ENCODE measurements at regions of chr7 and their contacts with region 1.

Region 1: GRCh38 chr7:149714050-149714909 is 59.1 kb downstream of the ZNF467 start:
- DNase-seq: peak; percentile 68 to 86
- H3K4me3 ChIP-seq: peak overlapping the region; percentile 76
- H3K27ac ChIP-seq: no peak overlapping the region
- H3K4me1 ChIP-seq: peaks cover 9% of the 10 kb centered on the region
- H3K27me3 ChIP-seq: no peaks in the 10 kb centered on the region
- CTCF ChIP-seq: no peak

Region 2: DNA sequence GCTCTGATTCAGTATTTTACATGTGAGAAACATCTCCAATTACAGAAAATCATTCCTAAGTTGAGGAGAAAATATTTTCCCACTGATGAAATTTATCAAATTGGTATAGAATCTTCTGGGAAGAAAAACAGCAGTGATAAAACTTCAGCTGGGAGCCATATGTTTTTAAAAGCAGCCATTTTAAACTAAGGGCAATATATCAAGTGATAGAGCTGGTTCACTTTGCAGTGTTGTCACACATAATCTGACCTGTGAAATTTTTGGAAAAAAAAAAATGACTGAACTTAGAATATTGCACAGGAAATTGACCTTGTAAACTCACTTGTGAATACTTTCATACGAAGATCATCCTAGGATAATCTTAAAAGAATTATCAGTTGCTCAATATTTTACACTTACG is 819.7 kb before region 1 on chr7:
- CTCF ChIA-PET with region 1: no interaction called
- POLR2A ChIA-PET with region 1: interaction called, 11 read pairs
- intact Hi-C with region 1: no loop called
- DNase-seq: no peak
- H3K4me3 ChIP-seq: no peak overlapping the region
- H3K27ac ChIP-seq: no peak overlapping the region
- H3K4me1 ChIP-seq: 0 out of 2 replicates have a peak, but pooled peaks cover 4% of the 10 kb centered on the region
- H3K27me3 ChIP-seq: no peaks in the 10 kb centered on the region
- CTCF ChIP-seq: no peak

Region 3: GRCh38 chr7:149081914-149082313 is 632.4 kb before region 1 on chr7:
- CTCF ChIA-PET with region 1: interaction called, 13 read pairs
- POLR2A ChIA-PET with region 1: no interaction called
- intact Hi-C with region 1: no loop called
- DNase-seq: no peak
- H3K4me3 ChIP-seq: no peak overlapping the region
- H3K27ac ChIP-seq: no peak overlapping the region
- H3K4me1 ChIP-seq: no peaks in the 10 kb centered on the region
- H3K27me3 ChIP-seq: no peaks in the 10 kb centered on the region
- CTCF ChIP-seq: no peak

Region 4: DNA sequence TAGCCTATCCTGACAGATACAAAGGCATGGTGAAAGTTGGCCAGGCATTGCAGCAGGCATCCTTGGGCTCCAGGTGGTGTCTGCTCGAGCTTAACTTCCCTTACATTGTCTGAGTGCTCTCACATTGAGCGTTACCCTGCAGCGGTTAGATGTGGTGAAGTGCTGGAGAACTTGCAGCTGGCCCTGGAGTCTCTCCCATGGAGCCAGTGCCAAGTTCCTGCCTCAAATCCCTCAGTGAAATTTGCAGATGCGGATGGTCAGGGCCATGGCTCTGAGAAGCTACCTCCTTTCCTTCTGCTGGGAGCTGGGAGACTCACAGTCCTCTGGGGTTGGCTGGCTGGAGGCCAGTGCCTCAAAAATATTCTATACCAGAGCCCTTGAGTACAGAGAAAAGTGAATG is 213.4 kb before region 1 on chr7:
- CTCF ChIA-PET with region 1: no interaction called
- POLR2A ChIA-PET with region 1: no interaction called
- intact Hi-C with region 1: no loop called
- DNase-seq: no peak
- H3K4me3 ChIP-seq: no peak overlapping the region
- H3K27ac ChIP-seq: no peak overlapping the region
- H3K4me1 ChIP-seq: peaks cover 7% of the 10 kb centered on the region
- H3K27me3 ChIP-seq: no peaks in the 10 kb centered on the region
- CTCF ChIP-seq: no peak

Region 5: GRCh38 chr7:149690688-149691446 is 23.4 kb before region 1 on chr7:
- CTCF ChIA-PET with region 1: no interaction called
- POLR2A ChIA-PET with region 1: no interaction called
- intact Hi-C with region 1: loop called (anchors 1 kb)
- DNase-seq: peak; percentile 80 to 95
- H3K4me3 ChIP-seq: peak overlapping the region; percentile 59
- H3K27ac ChIP-seq: no peak overlapping the region
- H3K4me1 ChIP-seq: peaks cover 9% of the 10 kb centered on the region
- H3K27me3 ChIP-seq: no peaks in the 10 kb centered on the region
- CTCF ChIP-seq: no peak